ENCODE measurements at regions of chr17 and their contacts with region 1.

Region 1: DNA sequence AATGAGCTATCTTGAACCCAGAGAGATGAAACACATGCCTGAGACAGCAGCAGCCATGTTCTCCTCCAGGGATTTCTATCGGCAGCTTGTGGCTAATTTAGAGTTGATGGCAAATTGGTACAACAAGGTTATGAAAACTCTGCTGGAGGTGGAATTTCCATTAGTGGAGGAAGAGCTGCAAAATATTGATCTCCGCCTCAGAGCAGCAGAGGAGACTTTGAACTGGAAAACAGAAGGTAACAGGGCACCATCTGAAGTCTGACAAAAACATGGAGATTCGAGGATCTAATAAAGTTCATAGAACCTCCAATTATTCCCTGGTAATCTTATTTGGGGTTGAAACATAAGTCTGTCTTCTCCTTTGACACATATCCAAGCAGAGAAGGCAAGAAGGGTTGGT is 52.8 kb downstream of the DNAH9 start:
- DNase-seq: peak in 1 of 2 donors; percentile 22
- H3K4me3 ChIP-seq: no peak overlapping the region
- H3K27ac ChIP-seq: no peak overlapping the region
- H3K4me1 ChIP-seq: no peaks in the 10 kb centered on the region
- H3K27me3 ChIP-seq: no peaks in the 10 kb centered on the region
- CTCF ChIP-seq: no peak
- POLR2A ChIP-seq: no peak

Region 2: GRCh38 chr17:11638700-11639265 is 12.3 kb before region 1 on chr17:
- intact Hi-C with region 1: no loop called
- DNase-seq: peak; percentile 40 to 64
- H3K4me3 ChIP-seq: no peak overlapping the region
- H3K27ac ChIP-seq: no peak overlapping the region
- H3K4me1 ChIP-seq: no peaks in the 10 kb centered on the region
- H3K27me3 ChIP-seq: no peaks in the 10 kb centered on the region
- CTCF ChIP-seq: no peak
- POLR2A ChIP-seq: no peak

Region 3: DNA sequence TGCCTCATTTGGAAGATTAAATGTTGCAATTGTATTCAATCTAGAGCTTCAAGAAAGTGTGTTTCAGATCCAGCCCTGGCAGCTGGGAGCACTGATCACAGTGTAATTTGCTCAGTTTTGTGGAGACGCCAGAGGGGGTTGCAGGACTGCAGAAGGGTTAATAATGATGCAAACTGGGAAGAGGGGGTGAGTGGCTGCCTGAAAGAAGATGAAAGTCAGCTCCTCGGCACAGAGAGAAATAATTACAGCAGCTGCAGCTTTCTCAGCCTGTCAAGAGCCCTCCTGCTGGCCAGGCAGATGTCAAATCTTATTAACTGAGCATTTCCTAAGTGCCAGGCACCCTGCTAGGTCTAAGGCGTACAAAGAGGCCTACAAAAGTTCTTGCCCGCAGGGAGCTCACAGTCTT is 248.5 kb after region 1 on chr17:
- intact Hi-C with region 1: loop called (anchors 10 kb)
- DNase-seq: no peak
- H3K4me3 ChIP-seq: no peak overlapping the region
- H3K27ac ChIP-seq: no peak overlapping the region
- H3K4me1 ChIP-seq: no peaks in the 10 kb centered on the region
- H3K27me3 ChIP-seq: no peaks in the 10 kb centered on the region
- CTCF ChIP-seq: no peak
- POLR2A ChIP-seq: no peak

Measured in vagina (tissue), 2 donors.